ENCODE measurements at regions of chr19 and their contacts with region 1.

Region 1: GRCh38 chr19:12965017-12965811 is 4.2 kb upstream of the DAND5 start:
- DNase-seq: peak; percentile 74
- H3K4me3 ChIP-seq: peak overlapping the region; percentile 1 to 48 (median 45)
- H3K27ac ChIP-seq: peak overlapping the region; percentile 4
- H3K4me1 ChIP-seq: peaks cover 2% of the 10 kb centered on the region
- H3K27me3 ChIP-seq: no peaks in the 10 kb centered on the region
- CTCF ChIP-seq: peak; percentile 77 to 99
- POLR2A ChIP-seq: no peak

Region 2: GRCh38 chr19:12801466-12802266 is 163.5 kb before region 1 on chr19 and contains the starts of genes PRDX2 and THSD8:
- CTCF ChIA-PET with region 1: no interaction called
- POLR2A ChIA-PET with region 1: no interaction called
- dilution Hi-C with region 1: no loop called
- intact Hi-C with region 1: no loop called
- DNase-seq: peak; percentile 75
- H3K4me3 ChIP-seq: peak within 1 kb of the TSS; percentile 40 to 72 (median 64)
- H3K27ac ChIP-seq: no peak within 1 kb of the TSS
- H3K4me1 ChIP-seq: peaks cover 15% of the 10 kb centered on the region
- H3K27me3 ChIP-seq: no peaks in the 10 kb centered on the region
- CTCF ChIP-seq: peak in 1 of 2 donors; percentile 9
- POLR2A ChIP-seq: peak; percentile 99
- total RNA-seq, gene PRDX2: 247 and 255 TPM in 2 replicates
- total RNA-seq, gene THSD8: 13.2 and 15.9 TPM in 2 replicates

Region 3: DNA sequence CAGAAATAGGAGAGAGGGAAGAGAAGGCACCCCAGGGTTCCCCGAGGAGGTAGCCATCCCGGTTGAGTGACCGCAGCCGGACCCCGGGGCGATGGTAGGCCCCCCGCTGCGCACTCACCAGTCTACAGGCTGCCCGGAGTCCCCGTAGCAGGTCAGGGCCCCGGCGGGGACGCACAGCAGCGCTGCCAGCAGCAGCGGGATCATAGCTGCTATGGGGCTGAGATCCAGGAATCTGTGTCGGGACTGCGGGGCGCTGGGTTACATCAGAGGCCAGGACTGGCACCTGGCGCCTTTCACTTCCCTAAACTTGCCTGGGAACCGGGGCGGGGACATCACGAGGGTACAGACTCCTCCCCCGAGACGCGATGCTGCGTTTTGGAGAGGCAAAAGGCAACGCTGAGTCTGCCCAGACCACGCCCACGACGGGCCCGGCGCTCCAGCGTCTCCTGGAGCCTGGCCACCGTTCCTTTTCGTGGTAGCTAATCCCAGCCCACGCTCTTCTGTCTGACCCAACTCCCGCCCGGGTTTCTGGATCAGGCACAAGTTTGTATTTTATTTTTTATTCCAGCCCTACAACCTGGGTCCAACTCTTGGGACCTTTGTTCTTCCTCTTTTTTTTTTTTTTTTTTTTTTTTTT is 83.9 kb before region 1 on chr19 and contains the start of gene DNASE2:
- CTCF ChIA-PET with region 1: interaction called, 14 read pairs
- POLR2A ChIA-PET with region 1: no interaction called
- dilution Hi-C with region 1: no loop called
- intact Hi-C with region 1: loop called (anchors 1 kb)
- DNase-seq: peak; percentile 82
- H3K4me3 ChIP-seq: peak within 1 kb of the TSS; percentile 25 to 78 (median 49)
- H3K27ac ChIP-seq: peak within 1 kb of the TSS; percentile 49
- H3K4me1 ChIP-seq: peaks cover 4% of the 10 kb centered on the region
- H3K27me3 ChIP-seq: peaks cover 9 to 20% of the 10 kb centered on the region in 2 experiments
- CTCF ChIP-seq: no peak
- POLR2A ChIP-seq: peak; percentile 36
- total RNA-seq, gene DNASE2: 31.3 and 34.8 TPM in 2 replicates

Region 4: DNA sequence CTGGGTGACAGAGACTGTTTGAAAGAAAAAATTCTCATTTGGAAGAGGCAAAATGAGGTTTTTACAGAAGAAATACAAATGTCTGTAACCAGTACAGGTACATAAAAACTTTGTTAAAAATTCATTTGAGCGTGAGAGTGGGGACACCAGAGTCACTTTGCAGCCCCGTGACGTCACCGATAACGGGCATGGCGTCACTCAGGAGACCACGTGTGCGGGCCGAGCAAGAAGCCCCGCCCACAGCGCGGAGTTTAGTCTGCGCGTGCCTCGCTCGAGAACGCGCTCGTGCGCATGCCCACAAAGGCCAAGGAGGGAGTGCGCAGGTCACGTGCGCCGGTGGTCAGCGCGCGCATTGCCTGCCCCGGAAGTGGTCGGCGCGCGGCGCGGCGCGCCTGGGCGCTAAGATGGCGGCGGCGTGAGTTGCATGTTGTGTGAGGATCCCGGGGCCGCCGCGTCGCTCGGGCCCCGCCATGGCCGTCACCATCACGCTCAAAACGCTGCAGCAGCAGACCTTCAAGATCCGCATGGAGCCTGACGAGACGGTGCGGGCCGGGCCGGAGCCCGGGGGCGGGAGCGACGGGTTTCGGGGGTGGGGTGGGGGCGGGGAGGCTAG is 19.6 kb before region 1 on chr19 and contains the start of gene RAD23A:
- CTCF ChIA-PET with region 1: interaction called, 12 read pairs
- POLR2A ChIA-PET with region 1: interaction called, 3 read pairs
- dilution Hi-C with region 1: no loop called
- intact Hi-C with region 1: no loop called
- DNase-seq: peak; percentile 99
- H3K4me3 ChIP-seq: peak within 1 kb of the TSS; percentile 72 to 92 (median 72)
- H3K27ac ChIP-seq: peak within 1 kb of the TSS; percentile 76
- H3K4me1 ChIP-seq: peaks cover 18% of the 10 kb centered on the region
- H3K27me3 ChIP-seq: no peaks in the 10 kb centered on the region
- CTCF ChIP-seq: no peak
- POLR2A ChIP-seq: peak; percentile 98
- total RNA-seq, gene RAD23A: 96.7 and 102 TPM in 2 replicates

Region 5: GRCh38 chr19:13022859-13023636 is 57.8 kb after region 1 on chr19:
- CTCF ChIA-PET with region 1: interaction called, 12 read pairs
- POLR2A ChIA-PET with region 1: no interaction called
- dilution Hi-C with region 1: no loop called
- intact Hi-C with region 1: no loop called
- DNase-seq: peak; percentile 80
- H3K4me3 ChIP-seq: peak overlapping the region; percentile 28 to 84 (median 59)
- H3K27ac ChIP-seq: peak overlapping the region; percentile 33
- H3K4me1 ChIP-seq: peaks cover 52% of the 10 kb centered on the region
- H3K27me3 ChIP-seq: no peaks in the 10 kb centered on the region
- CTCF ChIP-seq: no peak
- POLR2A ChIP-seq: peak; percentile 31

Region 6: GRCh38 chr19:13143135-13143534 is 177.9 kb after region 1 on chr19:
- CTCF ChIA-PET with region 1: no interaction called
- POLR2A ChIA-PET with region 1: no interaction called
- dilution Hi-C with region 1: no loop called
- intact Hi-C with region 1: no loop called
- DNase-seq: no peak
- H3K4me3 ChIP-seq: no peak overlapping the region
- H3K27ac ChIP-seq: no peak overlapping the region
- H3K4me1 ChIP-seq: no peaks in the 10 kb centered on the region
- H3K27me3 ChIP-seq: no peaks in the 10 kb centered on the region
- CTCF ChIP-seq: no peak
- POLR2A ChIP-seq: no peak